ENCODE measurements at regions of chr12 and their contacts with region 1.

Region 1: DNA sequence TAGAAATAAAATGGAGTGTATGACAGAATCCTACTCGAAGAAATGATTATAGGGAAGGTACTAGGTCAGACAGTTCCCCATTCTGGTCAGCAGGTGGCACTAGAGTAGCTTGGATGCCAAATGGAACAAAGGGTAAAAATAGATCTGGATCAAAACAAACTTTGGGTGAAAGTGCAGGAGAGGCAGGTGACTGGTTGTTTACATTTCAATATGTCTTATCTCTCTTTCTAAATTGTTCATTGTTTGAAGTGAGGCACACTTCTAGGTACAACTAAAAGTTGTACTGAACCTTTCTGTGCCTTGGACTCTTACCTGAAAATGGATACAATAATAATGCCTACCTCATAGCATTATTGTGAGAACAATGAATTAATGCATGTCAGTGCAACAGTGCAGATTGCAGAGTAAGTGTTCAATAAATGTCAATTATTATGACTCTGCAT is 62.0 kb upstream of the OSBPL8 start:
- DNase-seq: peak; percentile 93
- H3K4me3 ChIP-seq: no peak overlapping the region
- H3K27ac ChIP-seq: no peak overlapping the region
- H3K4me1 ChIP-seq: peaks cover 0 to 7% (median 5%) of the 10 kb centered on the region in 4 donors
- H3K27me3 ChIP-seq: no peaks in the 10 kb centered on the region
- CTCF ChIP-seq: peak; percentile 96 to 98 (median 98)
- EP300 ChIP-seq: no peak
- POLR2A ChIP-seq: no peak

Region 2: GRCh38 chr12:76236611-76237010 is 385.0 kb before region 1 on chr12:
- intact Hi-C with region 1: no loop called
- DNase-seq: no peak
- H3K4me3 ChIP-seq: no peak overlapping the region
- H3K27ac ChIP-seq: no peak overlapping the region
- H3K4me1 ChIP-seq: no peaks in the 10 kb centered on the region
- H3K27me3 ChIP-seq: no peaks in the 10 kb centered on the region
- CTCF ChIP-seq: no peak
- EP300 ChIP-seq: no peak
- POLR2A ChIP-seq: no peak

Region 3: DNA sequence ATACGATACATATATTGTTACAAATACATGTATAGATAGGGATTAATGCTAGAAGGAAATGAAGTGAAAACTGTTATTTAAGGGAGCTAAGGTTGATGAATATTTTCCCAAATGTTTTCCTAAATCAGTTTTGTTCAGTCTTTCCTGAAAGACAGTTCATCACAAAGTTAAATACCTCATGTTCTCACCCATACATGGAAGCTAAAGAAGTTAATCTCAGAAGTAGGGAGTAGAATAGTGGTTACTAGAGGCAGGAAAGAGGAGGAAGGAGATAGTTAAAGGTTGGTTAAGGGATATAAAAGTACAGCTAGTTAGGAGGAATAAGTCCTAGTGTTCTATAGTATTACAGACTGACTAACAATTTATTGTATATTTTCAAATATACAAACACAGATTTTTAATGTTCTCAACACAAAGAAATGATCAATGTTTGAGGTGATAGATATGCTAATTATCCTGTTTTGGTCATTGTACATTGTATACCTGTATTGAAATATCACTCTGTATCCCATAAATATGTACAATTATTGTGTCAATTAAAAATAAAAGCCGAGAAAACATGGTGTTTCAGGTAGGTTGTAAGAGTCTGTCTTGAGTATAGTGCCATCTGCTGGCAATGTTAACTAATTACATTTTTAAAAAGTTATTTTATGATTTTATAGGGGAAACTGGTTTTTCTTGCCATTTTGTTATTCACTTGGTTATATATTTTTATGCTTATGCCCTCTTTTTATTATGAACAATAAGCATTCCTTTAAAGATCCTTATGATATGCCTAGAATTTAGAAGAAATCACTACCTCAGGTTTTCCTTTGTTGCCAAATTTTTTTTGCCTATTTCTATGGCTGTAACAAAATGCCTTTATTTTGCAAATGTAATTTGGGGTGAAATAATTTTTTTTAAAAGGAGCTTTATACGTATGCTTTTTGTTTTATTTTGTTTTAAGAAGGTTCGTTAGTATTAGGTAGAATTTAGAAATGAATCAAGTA is 169.3 kb after region 1 on chr12:
- intact Hi-C with region 1: loop called (anchors 1 kb)
- DNase-seq: no peak
- H3K4me3 ChIP-seq: no peak overlapping the region
- H3K27ac ChIP-seq: no peak overlapping the region
- H3K4me1 ChIP-seq: peaks cover 10 to 58% (median 54%) of the 10 kb centered on the region in 4 donors
- H3K27me3 ChIP-seq: no peaks in the 10 kb centered on the region
- CTCF ChIP-seq: peak; percentile 65 to 68 (median 65)
- EP300 ChIP-seq: no peak
- POLR2A ChIP-seq: no peak

Region 4: GRCh38 chr12:77010691-77011548 is 389.3 kb after region 1 on chr12:
- intact Hi-C with region 1: loop called (anchors 5 kb)
- DNase-seq: no peak
- H3K4me3 ChIP-seq: peak overlapping the region in 1 of 4 donors; percentile 7
- H3K27ac ChIP-seq: no peak overlapping the region
- H3K4me1 ChIP-seq: peaks cover 0 to 6% (median 6%) of the 10 kb centered on the region in 4 donors
- H3K27me3 ChIP-seq: no peaks in the 10 kb centered on the region
- CTCF ChIP-seq: peak; percentile 80 to 97 (median 86)
- EP300 ChIP-seq: no peak
- POLR2A ChIP-seq: no peak

Measured in esophagus muscularis mucosa (tissue), 4 donors.